Activated T-helper 2 cell treated with anti-CD3 and anti-CD28 coated beads, Interferon-gamma antibody, Interleukin-2, Interleukin-4, amounts not matched to agents 10 μg/mL and 5 μg/mL and 100 μg/mL, durations not matched to agents 14 hours and 24 hours and 36 hours (primary cell): ENCODE measurements at regions of chr5 and their contacts with region 1.

Region 1: GRCh38 chr5:76544268-76544926 is 78.8 kb downstream of the F2RL2 start:
- DNase-seq: peak; percentile 33
- H3K4me3 Mint-ChIP-seq: peak overlapping the region; percentile 75
- H3K27ac Mint-ChIP-seq: peak overlapping the region; percentile 90
- H3K4me1 Mint-ChIP-seq: peaks cover 83% of the 10 kb centered on the region
- H3K27me3 Mint-ChIP-seq: no peaks in the 10 kb centered on the region

Region 2: DNA sequence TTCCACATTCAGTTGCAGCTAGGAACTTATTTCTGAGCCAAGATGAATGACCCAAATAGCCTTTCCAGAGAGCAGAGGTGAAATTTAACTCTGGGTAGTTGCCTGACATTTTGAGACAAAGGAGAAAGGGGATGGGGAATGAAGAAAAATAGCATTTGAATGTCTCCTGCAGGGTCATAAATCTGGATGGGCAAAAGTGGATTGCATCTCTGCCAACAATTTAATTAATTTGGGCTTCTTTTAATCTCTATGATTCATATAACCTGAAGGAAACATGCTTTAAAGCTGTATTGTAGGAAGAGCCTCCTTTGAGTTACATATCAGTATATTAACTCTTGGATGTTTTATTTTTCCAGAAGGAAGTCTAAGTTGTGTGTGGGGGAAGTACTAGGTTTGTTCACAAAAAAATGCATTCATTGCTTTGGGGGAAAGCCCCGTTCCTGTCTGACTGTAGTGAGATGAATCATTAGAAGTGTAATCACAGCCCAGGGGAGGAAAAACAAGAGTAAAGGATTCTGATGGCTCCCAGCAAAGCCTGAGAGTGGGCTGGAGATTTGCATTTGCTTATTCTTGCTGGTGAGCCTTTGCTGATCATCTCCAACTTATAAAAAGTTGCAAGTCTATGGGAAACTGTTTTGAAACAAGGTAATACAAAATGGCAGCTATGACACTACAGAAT is 274.3 kb before region 1 on chr5:
- intact Hi-C with region 1: loop called (anchors 1 kb)
- DNase-seq: no peak
- H3K4me3 Mint-ChIP-seq: peak overlapping the region; percentile 49
- H3K27ac Mint-ChIP-seq: peak overlapping the region; percentile 81
- H3K4me1 Mint-ChIP-seq: peaks cover 32% of the 10 kb centered on the region
- H3K27me3 Mint-ChIP-seq: no peaks in the 10 kb centered on the region

Region 3: GRCh38 chr5:76473661-76474060 is 70.7 kb before region 1 on chr5:
- intact Hi-C with region 1: loop called (anchors 2 kb)
- DNase-seq: peak; percentile 49
- H3K4me3 Mint-ChIP-seq: peak overlapping the region; percentile 30
- H3K27ac Mint-ChIP-seq: peak overlapping the region; percentile 80
- H3K4me1 Mint-ChIP-seq: peaks cover 48% of the 10 kb centered on the region
- H3K27me3 Mint-ChIP-seq: no peaks in the 10 kb centered on the region

Region 4: GRCh38 chr5:76527685-76528161 is 16.7 kb before region 1 on chr5:
- intact Hi-C with region 1: loop called (anchors 2 kb)
- DNase-seq: no peak
- H3K4me3 Mint-ChIP-seq: no peak overlapping the region
- H3K27ac Mint-ChIP-seq: no peak overlapping the region
- H3K4me1 Mint-ChIP-seq: peaks cover 57% of the 10 kb centered on the region
- H3K27me3 Mint-ChIP-seq: no peaks in the 10 kb centered on the region